ENCODE measurements at regions of chr2 and their contacts with region 1.

Region 1: GRCh38 chr2:146312899-146313298 is 1531.9 kb upstream of the ACVR2A start:
- DNase-seq: peak; percentile 52
- ATAC-seq: peak; percentile 48
- H3K4me3 ChIP-seq: no peak overlapping the region
- H3K27ac ChIP-seq: no peak overlapping the region
- H3K4me1 ChIP-seq: peaks cover 5% of the 10 kb centered on the region
- H3K27me3 ChIP-seq: no peaks in the 10 kb centered on the region
- CTCF ChIP-seq: peak; percentile 63

Region 2: GRCh38 chr2:145919477-145919876 is 393.4 kb before region 1 on chr2:
- CTCF ChIA-PET with region 1: interaction called, 5 read pairs
- POLR2A ChIA-PET with region 1: no interaction called
- intact Hi-C with region 1: loop called (anchors 10 kb)
- DNase-seq: peak; percentile 39
- ATAC-seq: no peak; the same call in 1 of the 2 replicates
- H3K4me3 ChIP-seq: no peak overlapping the region
- H3K27ac ChIP-seq: no peak overlapping the region
- H3K4me1 ChIP-seq: 0 out of 2 replicates have a peak, but pooled peaks cover 3% of the 10 kb centered on the region
- H3K27me3 ChIP-seq: no peaks in the 10 kb centered on the region
- CTCF ChIP-seq: peak; percentile 60

Region 3: GRCh38 chr2:146048141-146048540 is 264.8 kb before region 1 on chr2:
- CTCF ChIA-PET with region 1: no interaction called
- POLR2A ChIA-PET with region 1: no interaction called
- intact Hi-C with region 1: loop called (anchors 1 kb)
- DNase-seq: no peak
- ATAC-seq: no peak
- H3K4me3 ChIP-seq: no peak overlapping the region
- H3K27ac ChIP-seq: no peak overlapping the region
- H3K4me1 ChIP-seq: no peaks in the 10 kb centered on the region
- H3K27me3 ChIP-seq: no peaks in the 10 kb centered on the region
- CTCF ChIP-seq: no peak

Measured in PC-3 (cell line).